Adrenal gland (tissue), 19 donors: ENCODE measurements at regions of chr5 and their contacts with region 1.

Region 1: DNA sequence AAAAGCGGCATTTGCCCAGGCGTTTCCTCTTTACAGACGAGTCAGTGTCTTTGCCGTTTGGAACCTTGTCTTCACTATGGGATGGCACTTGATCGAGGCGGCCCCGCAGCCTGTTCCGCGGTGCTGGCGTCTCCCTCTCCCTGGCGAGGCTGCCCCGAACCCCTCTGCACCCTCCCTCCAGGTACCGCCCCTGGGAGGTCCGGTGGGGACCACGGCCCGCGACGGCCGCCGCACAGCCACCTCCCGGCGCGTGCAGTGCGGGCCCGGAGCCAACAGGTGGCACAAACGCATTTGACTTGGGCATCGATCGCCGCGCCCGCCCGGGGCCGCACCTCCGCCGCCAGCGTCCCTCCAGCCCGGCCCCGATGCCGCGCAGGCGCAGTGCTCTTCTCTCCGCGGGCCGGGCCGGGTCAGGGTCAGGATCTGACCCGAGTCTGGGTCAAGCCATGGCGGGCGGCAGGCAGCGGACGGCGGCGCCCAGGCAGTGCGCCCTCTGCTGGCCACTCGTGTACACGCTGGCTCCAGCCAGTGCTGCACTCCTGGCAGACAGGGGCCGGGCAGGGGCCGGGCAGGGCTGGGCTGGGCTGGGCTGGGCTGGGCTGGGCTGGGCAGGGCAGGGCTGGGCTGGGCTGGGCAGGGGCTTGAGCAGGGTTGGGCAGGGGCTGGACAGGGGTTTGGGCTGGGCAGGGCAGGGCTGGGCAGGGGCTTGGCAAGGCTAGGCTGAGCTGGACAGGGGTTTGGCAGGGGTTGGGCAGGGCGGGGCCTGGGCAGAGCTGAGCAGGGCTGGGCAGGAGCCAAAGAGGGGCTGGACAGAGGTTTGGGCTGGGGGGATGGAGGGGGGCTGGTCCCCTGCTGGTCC is 155.8 kb upstream of the IRX4 start:
- DNase-seq: peak; percentile 64 to 80 (median 77)
- H3K4me3 ChIP-seq: peak overlapping the region in 1 of 4 donors; percentile 55
- H3K27ac ChIP-seq: no peak overlapping the region
- H3K4me1 ChIP-seq: peaks cover 3 to 5% of the 10 kb centered on the region in 2 donors
- H3K27me3 ChIP-seq: no peaks in the 10 kb centered on the region
- CTCF ChIP-seq: peak; percentile 41 to 84 (median 76)
- POLR2A ChIP-seq: no peak

Region 2: GRCh38 chr5:1666812-1667588 is 371.6 kb before region 1 on chr5:
- intact Hi-C with region 1: loop called in 1 of 2 experiments (anchors 10 kb)
- DNase-seq: peak in 6 of 7 donors; percentile 56 to 81 (median 70)
- H3K4me3 ChIP-seq: peak overlapping the region in 2 of 4 donors; percentile 16 to 45
- H3K27ac ChIP-seq: peak overlapping the region in 1 of 5 donors; percentile 18
- H3K4me1 ChIP-seq: peaks cover 7 to 13% of the 10 kb centered on the region in 2 donors
- H3K27me3 ChIP-seq: no peaks in the 10 kb centered on the region
- CTCF ChIP-seq: peak in 5 of 6 experiments; percentile 9 to 72 (median 31)
- POLR2A ChIP-seq: no peak

Region 3: DNA sequence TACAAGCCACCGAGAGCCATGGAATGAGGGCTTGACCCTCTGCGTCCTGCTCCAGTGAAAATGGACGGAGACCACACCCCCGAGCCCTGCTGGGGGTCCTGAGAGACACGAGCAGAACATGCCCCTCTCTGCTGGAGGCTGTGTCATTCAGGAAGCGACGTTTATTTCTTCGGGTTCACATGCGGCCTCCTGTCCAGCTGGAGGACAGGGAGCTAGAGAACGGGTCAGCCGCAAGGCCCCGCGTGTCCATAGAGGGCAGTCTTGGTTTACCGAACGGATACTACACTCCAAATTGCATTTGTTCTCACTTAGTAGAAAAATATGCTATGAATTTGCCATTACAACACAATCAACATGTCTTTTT is 275.0 kb before region 1 on chr5:
- intact Hi-C with region 1: loop called in 1 of 2 experiments (anchors 10 kb)
- DNase-seq: peak; percentile 27 to 67 (median 51)
- H3K4me3 ChIP-seq: no peak overlapping the region
- H3K27ac ChIP-seq: no peak overlapping the region
- H3K4me1 ChIP-seq: no peaks in the 10 kb centered on the region
- H3K27me3 ChIP-seq: no peaks in the 10 kb centered on the region
- CTCF ChIP-seq: peak; percentile 30 to 62 (median 54)
- POLR2A ChIP-seq: no peak

Region 4: GRCh38 chr5:2110137-2110933 is 71.8 kb after region 1 on chr5:
- intact Hi-C with region 1: no loop called
- DNase-seq: no peak
- H3K4me3 ChIP-seq: no peak overlapping the region
- H3K27ac ChIP-seq: no peak overlapping the region
- H3K4me1 ChIP-seq: no peaks in the 10 kb centered on the region
- H3K27me3 ChIP-seq: no peaks in the 10 kb centered on the region
- CTCF ChIP-seq: no peak
- POLR2A ChIP-seq: no peak

Region 5: GRCh38 chr5:2223303-2223702 is 184.8 kb after region 1 on chr5:
- intact Hi-C with region 1: no loop called
- DNase-seq: no peak
- H3K4me3 ChIP-seq: no peak overlapping the region
- H3K27ac ChIP-seq: no peak overlapping the region
- H3K4me1 ChIP-seq: no peaks in the 10 kb centered on the region
- H3K27me3 ChIP-seq: no peaks in the 10 kb centered on the region
- CTCF ChIP-seq: no peak
- POLR2A ChIP-seq: no peak